CD8-positive, alpha-beta memory T cell (primary cell): ENCODE measurements at regions of chr17 and their contacts with region 1.

Region 1: DNA sequence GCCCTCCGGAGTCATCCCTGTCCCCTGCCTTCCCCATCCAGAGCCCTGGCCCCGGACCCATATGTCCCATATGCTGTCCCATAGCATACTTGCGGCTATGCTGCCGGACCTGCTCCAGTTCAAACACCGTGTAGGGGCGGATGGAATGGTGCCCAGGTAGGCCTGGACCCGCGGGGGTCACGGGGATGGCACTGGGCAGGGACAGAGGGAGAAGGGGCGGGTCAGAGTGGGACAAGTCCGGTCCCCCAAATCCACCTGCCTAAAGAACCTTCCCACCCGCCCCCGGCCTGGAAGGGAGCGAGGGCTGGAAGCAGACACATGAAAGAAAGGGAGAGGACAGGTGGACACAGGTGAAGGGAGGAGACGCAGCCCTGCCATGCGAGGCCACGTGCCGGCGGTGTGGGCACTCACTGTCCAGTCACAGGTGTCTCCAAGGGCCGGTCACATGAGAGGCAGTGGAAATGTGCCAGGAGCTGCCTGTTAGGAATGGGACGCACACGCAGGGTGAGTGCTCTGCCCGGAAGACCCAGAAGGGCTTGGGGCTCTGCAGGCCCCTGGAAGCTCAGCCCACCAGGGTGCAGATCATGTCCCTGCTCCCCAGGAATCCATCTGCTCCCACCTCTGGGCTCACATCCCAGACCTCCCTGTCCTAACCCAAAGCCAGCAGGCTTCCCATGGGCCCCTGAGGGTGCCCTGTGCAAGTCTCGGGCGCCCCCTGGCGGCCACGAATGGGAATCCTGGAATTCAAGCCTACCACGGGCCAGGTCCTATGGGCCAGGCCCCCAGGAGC is 14.0 kb downstream of the UBALD2 start:
- DNase-seq: peak; percentile 74 to 90 (median 80)
- H3K4me3 ChIP-seq: no peak overlapping the region
- H3K4me3 Mint-ChIP-seq: no peak overlapping the region
- H3K27ac ChIP-seq: no peak overlapping the region
- H3K27ac Mint-ChIP-seq: peak overlapping the region in 2 of 8 donors; percentile 26 to 83
- H3K4me1 ChIP-seq: peaks cover 14% of the 10 kb centered on the region
- H3K4me1 Mint-ChIP-seq: peaks cover 0 to 17% (median 7%) of the 10 kb centered on the region in 3 donors
- H3K27me3 ChIP-seq: no peaks in the 10 kb centered on the region
- H3K27me3 Mint-ChIP-seq: peaks cover 0 to 1% of the 10 kb centered on the region in 2 donors

Region 2: DNA sequence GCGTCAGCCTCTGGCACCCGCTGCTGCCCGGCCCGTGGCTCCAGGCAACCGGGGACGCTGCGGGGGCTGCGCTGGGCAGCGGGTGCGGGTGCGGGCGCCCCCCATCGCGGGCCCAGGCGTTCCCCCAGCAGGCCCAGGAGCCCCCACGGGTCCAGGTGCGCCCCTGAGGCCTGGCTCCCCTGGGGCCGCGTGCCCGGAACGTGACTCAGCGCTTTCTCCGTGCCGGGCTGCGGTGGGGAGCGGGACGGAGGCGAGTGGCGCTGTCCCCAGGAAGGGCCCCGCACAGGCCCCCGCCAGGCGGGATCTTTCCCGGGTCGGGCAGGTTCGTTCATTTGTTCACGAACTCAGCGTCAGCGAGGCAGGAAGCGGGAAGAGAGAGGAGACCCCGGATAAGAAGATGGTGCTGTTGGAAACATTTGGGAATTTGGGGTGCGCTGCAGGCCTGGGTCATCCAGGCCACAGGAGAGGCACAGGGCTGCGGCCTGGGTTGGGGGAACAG is 157.2 kb before region 1 on chr17:
- CTCF ChIA-PET with region 1: interaction called, 227 read pairs
- POLR2A ChIA-PET with region 1: interaction called, 9 read pairs
- DNase-seq: peak in 1 of 5 donors; percentile 26
- H3K4me3 ChIP-seq: peak overlapping the region; percentile 45
- H3K4me3 Mint-ChIP-seq: peak overlapping the region in 3 of 7 donors; percentile 44 to 82 (median 46)
- H3K27ac ChIP-seq: no peak overlapping the region
- H3K27ac Mint-ChIP-seq: peak overlapping the region in 1 of 8 donors; percentile 61
- H3K4me1 ChIP-seq: peaks cover 6% of the 10 kb centered on the region
- H3K4me1 Mint-ChIP-seq: peaks cover 3 to 15% (median 5%) of the 10 kb centered on the region in 3 donors
- H3K27me3 ChIP-seq: no peaks in the 10 kb centered on the region
- H3K27me3 Mint-ChIP-seq: no peaks in the 10 kb centered on the region

Region 3: GRCh38 chr17:76141212-76142038 is 137.7 kb before region 1 on chr17 and contains the start of gene FOXJ1:
- CTCF ChIA-PET with region 1: interaction called, 44 read pairs
- POLR2A ChIA-PET with region 1: interaction called, 5 read pairs
- DNase-seq: peak; percentile 83 to 95 (median 91)
- H3K4me3 ChIP-seq: peak within 1 kb of the TSS; percentile 66
- H3K4me3 Mint-ChIP-seq: peak within 1 kb of the TSS; percentile 81 to 90 (median 85)
- H3K27ac ChIP-seq: no peak within 1 kb of the TSS
- H3K27ac Mint-ChIP-seq: peak within 1 kb of the TSS; percentile 57 to 92 (median 84)
- H3K4me1 ChIP-seq: peaks cover 60% of the 10 kb centered on the region
- H3K4me1 Mint-ChIP-seq: peaks cover 51 to 68% (median 53%) of the 10 kb centered on the region in 3 donors
- H3K27me3 ChIP-seq: no peaks in the 10 kb centered on the region
- H3K27me3 Mint-ChIP-seq: peaks cover 0 to 7% of the 10 kb centered on the region in 2 donors
- total RNA-seq, gene FOXJ1: 0.64 to 0.94 TPM

Region 4: DNA sequence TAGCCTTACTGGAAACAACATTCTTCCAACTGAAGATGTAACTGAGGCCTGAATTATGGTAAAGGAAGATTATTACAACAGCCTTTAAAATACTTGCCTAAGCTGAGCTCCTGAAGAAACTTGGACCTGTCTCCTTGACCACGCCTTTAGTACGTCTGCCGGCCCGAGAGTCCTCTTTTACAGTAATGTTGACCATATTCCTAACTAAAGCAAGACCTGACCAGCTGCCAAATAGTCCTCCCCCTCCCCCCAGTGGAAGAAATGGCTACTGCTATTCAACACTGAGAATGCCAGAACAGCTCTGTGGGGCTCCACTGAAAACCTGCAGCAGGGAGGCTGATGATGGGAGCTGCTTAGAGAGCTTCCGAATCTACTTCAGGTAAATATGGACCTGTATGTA is 125.5 kb before region 1 on chr17:
- CTCF ChIA-PET with region 1: interaction called, 23 read pairs
- POLR2A ChIA-PET with region 1: no interaction called
- DNase-seq: no peak
- H3K4me3 ChIP-seq: no peak overlapping the region
- H3K4me3 Mint-ChIP-seq: peak overlapping the region in 1 of 7 donors; percentile 41
- H3K27ac ChIP-seq: no peak overlapping the region
- H3K27ac Mint-ChIP-seq: peak overlapping the region in 5 of 8 donors; percentile 62 to 89 (median 73)
- H3K4me1 ChIP-seq: peaks cover 27% of the 10 kb centered on the region
- H3K4me1 Mint-ChIP-seq: peaks cover 37 to 44% (median 42%) of the 10 kb centered on the region in 3 donors
- H3K27me3 ChIP-seq: no peaks in the 10 kb centered on the region
- H3K27me3 Mint-ChIP-seq: peaks cover 0 to 1% of the 10 kb centered on the region in 2 donors

Region 5: DNA sequence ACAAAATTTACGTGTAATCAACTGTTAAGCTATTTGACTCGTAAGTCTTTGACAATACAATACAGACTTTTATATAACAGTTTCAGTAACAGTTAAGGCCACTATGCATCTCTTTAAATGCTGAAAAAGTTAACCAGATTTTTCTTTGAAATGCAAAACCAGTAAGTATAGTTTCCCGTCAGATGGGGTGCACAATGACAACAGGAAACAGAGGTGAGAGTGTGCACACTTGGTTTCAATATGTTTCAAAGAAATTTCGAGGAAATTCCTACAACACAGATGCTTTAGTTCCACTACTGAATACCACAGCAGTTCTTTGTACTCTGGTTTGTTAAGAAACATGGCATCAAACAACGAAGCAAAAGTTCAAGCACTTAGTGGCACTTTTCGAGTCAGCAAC is 87.3 kb before region 1 on chr17:
- CTCF ChIA-PET with region 1: interaction called, 33 read pairs
- POLR2A ChIA-PET with region 1: no interaction called
- DNase-seq: peak in 4 of 5 donors; percentile 8 to 90 (median 70)
- H3K4me3 ChIP-seq: peak overlapping the region; percentile 40
- H3K4me3 Mint-ChIP-seq: peak overlapping the region; percentile 18 to 80 (median 56)
- H3K27ac ChIP-seq: no peak overlapping the region
- H3K27ac Mint-ChIP-seq: peak overlapping the region; percentile 29 to 97 (median 90)
- H3K4me1 ChIP-seq: peaks cover 84% of the 10 kb centered on the region
- H3K4me1 Mint-ChIP-seq: peaks cover 68 to 84% (median 82%) of the 10 kb centered on the region in 3 donors
- H3K27me3 ChIP-seq: no peaks in the 10 kb centered on the region
- H3K27me3 Mint-ChIP-seq: no peaks in the 10 kb centered on the region

Region 6: GRCh38 chr17:76246080-76247066 is 32.8 kb before region 1 on chr17:
- CTCF ChIA-PET with region 1: interaction called, 10 read pairs
- POLR2A ChIA-PET with region 1: interaction called, 6 read pairs
- DNase-seq: peak in 2 of 5 donors; percentile 44 to 60
- H3K4me3 ChIP-seq: peak overlapping the region; percentile 54
- H3K4me3 Mint-ChIP-seq: peak overlapping the region; percentile 14 to 74 (median 59)
- H3K27ac ChIP-seq: peak overlapping the region; percentile 19
- H3K27ac Mint-ChIP-seq: peak overlapping the region; percentile 37 to 95 (median 80)
- H3K4me1 ChIP-seq: peaks cover 58% of the 10 kb centered on the region
- H3K4me1 Mint-ChIP-seq: peaks cover 22 to 57% (median 47%) of the 10 kb centered on the region in 3 donors
- H3K27me3 ChIP-seq: no peaks in the 10 kb centered on the region
- H3K27me3 Mint-ChIP-seq: peaks cover 0 to under 1% of the 10 kb centered on the region in 2 donors

Region 7: DNA sequence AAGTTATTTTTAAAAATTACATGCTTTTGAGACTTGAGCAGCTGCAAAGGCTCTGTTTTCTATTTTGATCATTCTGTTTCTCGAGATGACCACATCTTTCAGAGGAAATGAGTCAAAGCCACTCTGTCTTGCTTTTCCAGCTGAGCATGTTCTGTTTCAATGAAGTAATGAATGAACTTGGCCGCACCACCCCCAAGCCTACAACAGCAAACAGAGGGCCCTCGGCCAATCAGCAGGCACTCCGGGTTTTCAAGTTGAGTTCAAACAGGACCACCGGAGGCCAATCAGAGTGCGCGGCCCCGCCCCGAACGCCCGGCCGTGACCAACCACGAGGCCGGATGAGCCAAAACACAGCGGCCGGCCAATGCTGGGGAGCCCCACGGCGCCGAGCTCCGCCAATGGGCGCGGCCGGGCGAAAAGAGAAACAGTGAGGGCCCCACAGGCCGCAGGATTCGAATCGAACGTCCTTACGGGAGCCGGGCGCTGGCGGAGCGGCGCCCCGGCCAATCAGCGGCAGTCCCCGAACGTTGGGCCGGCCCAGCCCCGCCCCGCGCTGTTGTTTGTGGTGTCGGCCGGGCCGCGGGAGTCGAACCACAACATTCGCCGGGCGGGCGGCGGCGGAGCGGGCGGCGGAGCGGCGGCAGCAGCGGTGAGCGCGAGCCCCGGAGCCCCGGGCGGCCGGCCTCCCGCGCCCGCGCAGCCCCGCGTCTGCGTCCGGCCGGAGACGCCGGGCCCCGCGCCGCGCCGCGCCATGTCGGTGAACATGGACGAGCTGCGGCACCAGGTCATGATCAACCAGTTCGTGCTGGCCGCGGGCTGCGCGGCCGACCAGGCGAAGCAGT is 14.2 kb before region 1 on chr17 and contains the start of gene UBALD2:
- CTCF ChIA-PET with region 1: interaction called, 49 read pairs
- POLR2A ChIA-PET with region 1: interaction called, 38 read pairs
- DNase-seq: peak; percentile 97 to 99 (median 99)
- H3K4me3 ChIP-seq: peak within 1 kb of the TSS; percentile 87
- H3K4me3 Mint-ChIP-seq: peak within 1 kb of the TSS; percentile 88 to 96 (median 91)
- H3K27ac ChIP-seq: peak within 1 kb of the TSS; percentile 79
- H3K27ac Mint-ChIP-seq: peak within 1 kb of the TSS; percentile 90 to 100 (median 96)
- H3K4me1 ChIP-seq: peaks cover 69% of the 10 kb centered on the region
- H3K4me1 Mint-ChIP-seq: peaks cover 57 to 70% (median 57%) of the 10 kb centered on the region in 3 donors
- H3K27me3 ChIP-seq: no peaks in the 10 kb centered on the region
- H3K27me3 Mint-ChIP-seq: no peaks in the 10 kb centered on the region
- total RNA-seq, gene UBALD2: 125 to 133 TPM